ENCODE measurements at regions of chr10 and their contacts with region 1.

Region 1: DNA sequence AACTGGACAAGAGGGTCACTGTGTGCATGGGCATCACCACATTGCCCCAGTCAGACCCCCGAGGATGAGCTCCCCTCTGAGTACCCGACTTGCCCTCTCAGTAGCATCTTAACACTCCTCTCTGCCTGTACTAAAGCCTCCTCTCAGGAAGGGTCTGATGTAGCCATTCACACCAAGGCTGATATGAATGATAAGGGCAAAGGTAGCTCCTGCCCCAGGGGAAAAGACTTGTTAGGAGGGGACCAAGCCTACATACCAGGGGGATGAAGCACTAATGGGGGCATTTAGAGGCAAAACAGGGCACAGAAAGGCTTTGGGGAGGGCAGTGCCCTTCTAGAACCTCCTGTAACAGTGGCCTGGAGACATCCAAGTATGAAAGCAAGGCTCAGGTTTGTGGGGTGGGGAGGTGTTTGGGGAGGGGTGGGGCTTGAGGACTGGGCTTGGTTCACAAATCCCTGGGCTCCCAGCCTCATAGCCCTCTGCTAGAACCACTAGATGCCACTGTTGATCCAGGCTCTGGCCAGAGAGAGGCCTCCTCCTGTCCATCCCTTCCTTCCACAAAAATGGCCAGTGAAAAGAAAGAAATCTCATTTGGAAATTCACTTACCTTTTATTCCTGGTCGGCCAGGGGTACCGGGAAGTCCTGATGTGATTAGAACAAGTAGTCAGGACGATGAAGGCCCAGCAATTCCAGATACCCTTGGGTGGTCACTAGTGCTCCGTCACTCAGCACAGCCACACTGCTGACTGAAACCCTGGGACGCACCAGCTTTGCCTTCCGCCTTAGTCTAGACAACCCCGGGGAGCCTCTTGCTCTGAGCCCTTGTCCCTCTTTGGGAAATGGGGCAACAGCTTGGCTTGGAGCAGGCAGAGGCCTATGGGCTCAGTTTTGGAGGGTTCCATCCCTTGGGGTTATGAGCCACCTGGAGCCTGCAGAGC is 40.3 kb downstream of the COL17A1 start:
- DNase-seq: peak; percentile 54
- ATAC-seq: peak; percentile 85 to 86

Region 2: GRCh38 chr10:104109908-104110662 is 64.7 kb after region 1 on chr10:
- intact Hi-C with region 1: loop called in 1 of 2 experiments (anchors 10 kb)
- DNase-seq: no peak
- ATAC-seq: peak in 1 of 2 donors; percentile 91

Region 3: GRCh38 chr10:104209575-104210198 is 164.3 kb after region 1 on chr10:
- intact Hi-C with region 1: loop called (anchors 2 to 10 kb)
- DNase-seq: peak; percentile 30
- ATAC-seq: peak in 1 of 2 donors; percentile 53